ENCODE measurements at regions of chr10 and their contacts with region 1.

Region 1: DNA sequence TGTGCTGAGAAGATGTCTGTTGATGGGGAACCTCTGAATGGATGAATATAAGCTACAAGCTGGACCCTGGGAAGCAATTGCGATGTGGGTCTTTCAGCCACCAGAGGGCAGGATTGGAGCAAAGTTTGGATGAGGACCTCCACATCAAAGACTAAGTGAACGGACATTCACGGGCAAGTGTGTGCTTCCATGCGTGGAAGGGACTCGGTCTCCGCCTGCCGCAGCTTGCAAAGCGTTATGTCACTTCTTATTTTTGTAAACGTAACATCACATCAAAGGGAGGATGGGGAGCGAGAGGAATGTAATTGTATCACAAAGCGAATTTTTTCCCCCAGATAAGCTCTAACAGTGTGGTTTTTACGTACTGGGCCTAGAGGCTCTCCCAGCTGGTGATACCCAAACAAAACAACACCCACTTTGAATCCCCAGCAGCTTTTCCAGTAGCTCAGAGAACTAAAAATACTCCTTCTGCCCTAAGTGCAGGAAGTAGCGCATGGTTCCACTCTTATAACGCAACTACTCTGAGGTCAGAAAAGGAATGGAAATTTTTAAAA is 65.0 kb downstream of the VWA2 start:
- DNase-seq: peak in 4 of 5 donors; percentile 82 to 87 (median 85)
- ATAC-seq: peak; percentile 79 to 89 (median 85)
- H3K4me3 ChIP-seq: peak overlapping the region in 11 of 12 donors; percentile 11 to 60 (median 46)
- H3K27ac ChIP-seq: peak overlapping the region in 11 of 12 donors; percentile 8 to 71 (median 52)
- H3K4me1 ChIP-seq: peaks cover 0 to 47% (median 13%) of the 10 kb centered on the region in 12 donors
- H3K27me3 ChIP-seq: no peaks in the 10 kb centered on the region
- CTCF ChIP-seq: peak; percentile 56 to 91 (median 79)
- POLR2A ChIP-seq: no peak

Region 2: GRCh38 chr10:113576852-113577251 is 727.2 kb before region 1 on chr10:
- intact Hi-C with region 1: no loop called
- DNase-seq: no peak
- ATAC-seq: peak in 3 of 4 donors; percentile 33 to 50 (median 48)
- H3K4me3 ChIP-seq: no peak overlapping the region
- H3K27ac ChIP-seq: no peak overlapping the region
- H3K4me1 ChIP-seq: no peaks in the 10 kb centered on the region
- H3K27me3 ChIP-seq: no peaks in the 10 kb centered on the region
- CTCF ChIP-seq: no peak
- POLR2A ChIP-seq: no peak

Region 3: DNA sequence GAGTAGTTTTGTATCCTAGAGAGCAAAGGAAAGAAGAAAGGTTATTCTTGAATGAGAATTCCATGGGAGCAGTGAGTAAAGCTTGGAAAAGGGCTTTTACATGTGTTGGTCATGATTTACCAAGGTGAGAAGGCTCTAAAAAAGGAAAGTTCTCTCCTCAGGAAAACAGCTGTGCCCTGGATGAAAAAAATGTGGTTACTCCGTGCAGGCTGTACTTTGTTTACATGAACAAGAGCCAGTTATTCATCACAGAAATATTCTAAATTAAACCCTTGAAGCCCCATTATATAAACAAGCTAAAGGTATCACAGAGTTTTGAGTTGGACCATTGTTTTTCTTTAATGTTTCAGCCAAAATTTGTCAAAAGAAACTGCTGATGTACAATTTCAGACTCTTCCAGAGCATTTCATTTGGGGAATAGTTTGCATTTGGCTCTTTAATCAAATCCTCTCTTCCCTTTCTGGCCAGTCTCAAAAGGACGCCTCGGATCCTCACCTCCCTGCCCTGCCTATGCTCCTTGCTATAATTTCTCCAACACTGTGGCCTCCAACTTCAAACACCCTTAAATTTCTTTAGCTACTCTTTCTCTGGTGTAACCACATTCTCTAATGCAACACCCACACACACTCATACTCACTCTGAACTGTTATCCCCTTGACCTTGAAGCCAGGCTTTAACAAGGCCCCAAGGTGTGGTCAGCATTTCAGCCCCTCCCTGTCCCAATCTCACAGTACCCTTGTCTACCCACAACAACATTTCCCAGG is 52.8 kb after region 1 on chr10:
- intact Hi-C with region 1: no loop called
- DNase-seq: no peak
- ATAC-seq: peak in 1 of 4 donors; percentile 33
- H3K4me3 ChIP-seq: no peak overlapping the region
- H3K27ac ChIP-seq: peak overlapping the region in 1 of 12 donors; percentile 60
- H3K4me1 ChIP-seq: peaks cover 0 to 21% (median 8%) of the 10 kb centered on the region in 12 donors
- H3K27me3 ChIP-seq: no peaks in the 10 kb centered on the region
- CTCF ChIP-seq: no peak
- POLR2A ChIP-seq: no peak

Region 4: GRCh38 chr10:114412907-114413386 is 108.9 kb after region 1 on chr10:
- intact Hi-C with region 1: loop called in 2 of 10 experiments (anchors 5 to 10 kb)
- DNase-seq: peak in 3 of 5 donors; percentile 23 to 58 (median 49)
- ATAC-seq: peak in 3 of 4 donors; percentile 52 to 59 (median 59)
- H3K4me3 ChIP-seq: no peak overlapping the region
- H3K27ac ChIP-seq: peak overlapping the region in 5 of 12 donors; percentile 6 to 50 (median 25)
- H3K4me1 ChIP-seq: peaks cover 0 to 22% (median 13%) of the 10 kb centered on the region in 12 donors
- H3K27me3 ChIP-seq: no peaks in the 10 kb centered on the region
- CTCF ChIP-seq: no peak
- POLR2A ChIP-seq: no peak

Region 5: DNA sequence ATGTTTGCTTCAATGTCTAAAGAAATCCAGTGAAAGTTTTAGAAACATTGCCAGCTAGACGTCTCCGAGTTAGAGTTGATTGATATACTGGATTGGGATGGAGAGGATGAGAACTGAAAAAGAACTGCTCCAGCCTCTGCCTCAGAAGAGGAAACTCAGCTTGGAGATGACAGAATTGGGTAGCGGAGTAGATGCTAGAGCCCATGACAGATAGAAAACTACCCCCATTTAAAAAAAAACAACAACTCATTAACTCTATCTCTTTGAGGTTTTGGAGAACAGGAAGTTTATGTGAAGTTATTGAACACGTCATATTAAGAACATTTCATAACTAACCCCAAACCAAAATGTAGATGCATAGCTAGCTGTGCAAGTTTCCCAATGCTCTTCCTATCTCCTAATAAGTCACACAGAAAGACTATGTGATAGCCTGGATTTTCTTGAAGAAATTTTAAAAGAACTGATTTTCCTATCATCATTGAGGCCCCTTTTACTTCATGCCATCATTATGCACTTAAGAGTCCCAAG is 128.5 kb after region 1 on chr10:
- intact Hi-C with region 1: loop called in 9 of 10 experiments (anchors 5 kb)
- DNase-seq: no peak
- ATAC-seq: no peak
- H3K4me3 ChIP-seq: no peak overlapping the region
- H3K27ac ChIP-seq: no peak overlapping the region
- H3K4me1 ChIP-seq: peaks cover 0 to 12% (median 4%) of the 10 kb centered on the region in 12 donors
- H3K27me3 ChIP-seq: no peaks in the 10 kb centered on the region
- CTCF ChIP-seq: no peak
- POLR2A ChIP-seq: no peak

Region 6: GRCh38 chr10:114470956-114471905 is 167.1 kb after region 1 on chr10:
- intact Hi-C with region 1: loop called in 1 of 10 experiments (anchors 5 kb)
- DNase-seq: peak; percentile 59 to 77 (median 63)
- ATAC-seq: peak; percentile 52 to 81 (median 74)
- H3K4me3 ChIP-seq: no peak overlapping the region
- H3K27ac ChIP-seq: peak overlapping the region in 8 of 12 donors; percentile 9 to 60 (median 28)
- H3K4me1 ChIP-seq: peaks cover 0 to 46% (median 17%) of the 10 kb centered on the region in 12 donors
- H3K27me3 ChIP-seq: no peaks in the 10 kb centered on the region
- CTCF ChIP-seq: peak; percentile 83 to 96 (median 92)
- POLR2A ChIP-seq: no peak

Region 7: GRCh38 chr10:114779803-114780609 is 475.9 kb after region 1 on chr10:
- intact Hi-C with region 1: loop called in 5 of 10 experiments (anchors 5 to 10 kb)
- DNase-seq: no peak
- ATAC-seq: peak in 2 of 4 donors; percentile 38 to 70
- H3K4me3 ChIP-seq: no peak overlapping the region
- H3K27ac ChIP-seq: peak overlapping the region in 9 of 12 donors; percentile 7 to 50 (median 27)
- H3K4me1 ChIP-seq: peaks cover 0 to 37% (median 11%) of the 10 kb centered on the region in 12 donors
- H3K27me3 ChIP-seq: no peaks in the 10 kb centered on the region
- CTCF ChIP-seq: no peak
- POLR2A ChIP-seq: no peak

Region 8: DNA sequence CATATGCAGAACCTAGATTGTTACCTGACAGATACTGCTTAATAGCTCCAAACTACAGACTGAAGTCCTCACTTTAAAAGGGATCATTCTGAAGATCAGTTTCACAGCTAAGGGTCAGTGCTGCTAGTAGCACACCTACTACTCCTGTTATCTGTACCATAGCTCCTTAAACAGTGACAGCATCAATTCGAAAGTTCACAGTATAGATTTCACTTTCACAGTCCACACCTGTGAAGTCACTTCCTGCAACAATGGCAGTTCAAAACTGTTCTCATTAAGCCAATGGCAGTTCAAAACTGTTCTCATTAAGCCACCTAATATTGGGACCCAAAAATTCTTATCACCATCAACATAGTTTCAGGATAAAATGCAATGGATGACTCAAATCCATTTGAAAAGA is 506.8 kb after region 1 on chr10:
- intact Hi-C with region 1: loop called in 2 of 10 experiments (anchors 10 kb)
- DNase-seq: no peak
- ATAC-seq: no peak
- H3K4me3 ChIP-seq: no peak overlapping the region
- H3K27ac ChIP-seq: no peak overlapping the region
- H3K4me1 ChIP-seq: no peaks in the 10 kb centered on the region
- H3K27me3 ChIP-seq: no peaks in the 10 kb centered on the region
- CTCF ChIP-seq: no peak
- POLR2A ChIP-seq: no peak

Measured in heart left ventricle (tissue), 16 donors.